ENCODE measurements at regions of chr17 and their contacts with region 1.

Region 1: GRCh38 chr17:82098072-82098821 is at the start of gene FASN:
- DNase-seq: peak; percentile 80 to 97 (median 91)
- ATAC-seq: peak; percentile 68
- H3K4me3 ChIP-seq: peak within 1 kb of the TSS; percentile 54
- H3K4me3 Mint-ChIP-seq: peak within 1 kb of the TSS; percentile 83
- H3K27ac ChIP-seq: peak within 1 kb of the TSS; percentile 58 to 73
- H3K27ac Mint-ChIP-seq: peak within 1 kb of the TSS; percentile 80
- H3K4me1 ChIP-seq: peaks cover 28% of the 10 kb centered on the region
- H3K4me1 Mint-ChIP-seq: peaks cover 3% of the 10 kb centered on the region
- H3K27me3 ChIP-seq: no peaks in the 10 kb centered on the region
- H3K27me3 Mint-ChIP-seq: no peaks in the 10 kb centered on the region
- CTCF ChIP-seq: no peak
- total RNA-seq, gene FASN: 168 to 174 TPM

Region 2: DNA sequence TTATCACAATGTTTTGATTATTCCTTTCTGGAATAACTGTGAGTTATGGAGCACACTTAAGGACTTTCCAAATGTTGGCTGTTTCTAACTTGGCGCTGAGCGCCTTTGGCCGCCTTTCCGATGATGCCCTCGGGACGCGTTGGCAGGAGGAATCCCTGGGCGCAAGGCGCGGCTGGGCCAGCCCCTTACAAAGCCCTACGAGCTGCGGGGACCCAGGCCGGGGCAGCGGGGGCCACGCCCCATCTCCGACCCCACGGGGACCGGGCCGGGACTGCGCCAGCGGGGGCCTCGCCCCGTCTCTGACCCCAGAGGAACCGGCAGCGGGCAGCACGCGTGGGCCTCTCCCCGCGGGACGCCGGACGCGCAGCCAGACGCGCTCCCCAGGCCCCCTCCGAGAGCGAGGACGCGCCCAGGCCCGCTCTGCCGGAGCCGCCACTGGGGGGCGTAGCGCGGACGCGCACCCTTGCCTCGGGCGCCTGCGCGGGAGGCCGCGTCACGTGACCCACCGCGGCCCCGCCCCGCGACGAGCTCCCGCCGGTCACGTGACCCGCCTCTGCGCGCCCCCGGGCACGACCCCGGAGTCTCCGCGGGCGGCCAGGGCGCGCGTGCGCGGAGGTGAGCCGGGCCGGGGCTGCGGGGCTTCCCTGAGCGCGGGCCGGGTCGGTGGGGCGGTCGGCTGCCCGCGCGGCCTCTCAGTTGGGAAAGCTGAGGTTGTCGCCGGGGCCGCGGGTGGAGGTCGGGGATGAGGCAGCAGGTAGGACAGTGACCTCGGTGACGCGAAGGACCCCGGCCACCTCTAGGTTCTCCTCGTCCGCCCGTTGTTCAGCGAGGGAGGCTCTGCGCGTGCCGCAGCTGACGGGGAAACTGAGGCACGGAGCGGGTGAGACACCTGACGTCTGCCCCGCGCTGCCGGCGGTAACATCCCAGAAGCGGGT is 1997.0 kb before region 1 on chr17 and contains the start of gene GAA:
- CTCF ChIA-PET with region 1: no interaction called
- POLR2A ChIA-PET with region 1: no interaction called
- intact Hi-C with region 1: loop called in 1 of 2 experiments (anchors 10 kb)
- DNase-seq: peak; percentile 71 to 95 (median 86)
- ATAC-seq: peak; percentile 83
- H3K4me3 ChIP-seq: peak within 1 kb of the TSS; percentile 99
- H3K4me3 Mint-ChIP-seq: peak within 1 kb of the TSS; percentile 93
- H3K27ac ChIP-seq: peak within 1 kb of the TSS in 1 of 2 donors; percentile 46
- H3K27ac Mint-ChIP-seq: peak within 1 kb of the TSS; percentile 84
- H3K4me1 ChIP-seq: peaks cover 29% of the 10 kb centered on the region
- H3K4me1 Mint-ChIP-seq: peaks cover 35% of the 10 kb centered on the region
- H3K27me3 ChIP-seq: no peaks in the 10 kb centered on the region
- H3K27me3 Mint-ChIP-seq: no peaks in the 10 kb centered on the region
- CTCF ChIP-seq: peak; percentile 64
- total RNA-seq, gene GAA: 22.2 to 22.4 TPM

Region 3: GRCh38 chr17:82030470-82031302 is 67.6 kb before region 1 on chr17:
- CTCF ChIA-PET with region 1: interaction called, 13 read pairs
- POLR2A ChIA-PET with region 1: interaction called, 5 read pairs
- intact Hi-C with region 1: loop called in 1 of 2 experiments (anchors 2 kb)
- DNase-seq: peak; percentile 73 to 92 (median 81)
- ATAC-seq: peak; percentile 85
- H3K4me3 ChIP-seq: peak overlapping the region; percentile 53
- H3K4me3 Mint-ChIP-seq: peak overlapping the region; percentile 91
- H3K27ac ChIP-seq: no peak overlapping the region
- H3K27ac Mint-ChIP-seq: no peak overlapping the region
- H3K4me1 ChIP-seq: peaks cover 28% of the 10 kb centered on the region
- H3K4me1 Mint-ChIP-seq: peaks cover 21% of the 10 kb centered on the region
- H3K27me3 ChIP-seq: no peaks in the 10 kb centered on the region
- H3K27me3 Mint-ChIP-seq: no peaks in the 10 kb centered on the region
- CTCF ChIP-seq: peak; percentile 97

Region 4: DNA sequence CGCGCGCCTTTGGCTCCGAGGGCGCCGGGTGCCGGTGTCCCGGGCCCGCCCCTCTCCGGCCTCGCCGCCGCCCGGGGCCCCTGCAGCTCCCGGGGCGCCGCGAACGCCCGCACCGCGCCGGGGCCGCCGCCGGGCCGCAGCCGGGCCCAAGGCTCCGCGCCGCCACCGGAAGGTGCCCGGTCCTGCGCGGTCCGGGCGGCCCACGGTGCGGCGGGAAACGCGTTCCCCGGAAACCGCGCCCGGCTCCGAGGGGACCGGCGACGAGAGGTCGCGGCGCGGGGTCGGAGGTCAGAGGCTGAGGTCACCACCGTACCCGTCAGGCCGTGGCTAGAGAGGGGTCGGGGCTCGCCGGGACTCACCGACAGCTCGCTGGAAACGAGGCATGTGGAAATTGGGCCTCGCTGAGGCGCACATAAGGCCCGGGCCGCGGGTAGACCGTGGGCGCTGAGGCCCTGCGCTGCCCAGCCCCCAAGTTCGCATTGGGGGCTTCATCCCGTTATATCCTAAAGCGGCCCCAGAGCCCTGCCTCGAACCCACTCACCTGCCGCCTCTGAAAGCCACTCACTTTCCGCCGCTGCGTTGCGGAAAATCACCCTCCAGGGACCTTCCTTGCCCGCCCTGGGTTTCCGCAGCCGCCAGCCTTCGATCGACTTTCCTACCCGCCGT is 32.5 kb before region 1 on chr17 and contains the start of gene DUS1L:
- CTCF ChIA-PET with region 1: no interaction called
- POLR2A ChIA-PET with region 1: interaction called, 10 read pairs
- intact Hi-C with region 1: loop called in 1 of 2 experiments (anchors 2 kb)
- DNase-seq: peak; percentile 43 to 89 (median 66)
- ATAC-seq: peak; percentile 88
- H3K4me3 ChIP-seq: peak within 1 kb of the TSS; percentile 81
- H3K4me3 Mint-ChIP-seq: peak within 1 kb of the TSS; percentile 89
- H3K27ac ChIP-seq: peak within 1 kb of the TSS; percentile 65 to 85
- H3K27ac Mint-ChIP-seq: peak within 1 kb of the TSS; percentile 88
- H3K4me1 ChIP-seq: peaks cover 34% of the 10 kb centered on the region
- H3K4me1 Mint-ChIP-seq: peaks cover 9% of the 10 kb centered on the region
- H3K27me3 ChIP-seq: no peaks in the 10 kb centered on the region
- H3K27me3 Mint-ChIP-seq: no peaks in the 10 kb centered on the region
- CTCF ChIP-seq: no peak
- total RNA-seq, gene DUS1L: 160 to 163 TPM

Region 5: GRCh38 chr17:82143333-82143732 is 45.1 kb after region 1 on chr17:
- CTCF ChIA-PET with region 1: no interaction called
- POLR2A ChIA-PET with region 1: no interaction called
- intact Hi-C with region 1: no loop called
- DNase-seq: no peak
- ATAC-seq: no peak
- H3K4me3 ChIP-seq: no peak overlapping the region
- H3K4me3 Mint-ChIP-seq: no peak overlapping the region
- H3K27ac ChIP-seq: no peak overlapping the region
- H3K27ac Mint-ChIP-seq: no peak overlapping the region
- H3K4me1 ChIP-seq: no peaks in the 10 kb centered on the region
- H3K4me1 Mint-ChIP-seq: peaks cover 6% of the 10 kb centered on the region
- H3K27me3 ChIP-seq: no peaks in the 10 kb centered on the region
- H3K27me3 Mint-ChIP-seq: no peaks in the 10 kb centered on the region
- CTCF ChIP-seq: no peak

Region 6: DNA sequence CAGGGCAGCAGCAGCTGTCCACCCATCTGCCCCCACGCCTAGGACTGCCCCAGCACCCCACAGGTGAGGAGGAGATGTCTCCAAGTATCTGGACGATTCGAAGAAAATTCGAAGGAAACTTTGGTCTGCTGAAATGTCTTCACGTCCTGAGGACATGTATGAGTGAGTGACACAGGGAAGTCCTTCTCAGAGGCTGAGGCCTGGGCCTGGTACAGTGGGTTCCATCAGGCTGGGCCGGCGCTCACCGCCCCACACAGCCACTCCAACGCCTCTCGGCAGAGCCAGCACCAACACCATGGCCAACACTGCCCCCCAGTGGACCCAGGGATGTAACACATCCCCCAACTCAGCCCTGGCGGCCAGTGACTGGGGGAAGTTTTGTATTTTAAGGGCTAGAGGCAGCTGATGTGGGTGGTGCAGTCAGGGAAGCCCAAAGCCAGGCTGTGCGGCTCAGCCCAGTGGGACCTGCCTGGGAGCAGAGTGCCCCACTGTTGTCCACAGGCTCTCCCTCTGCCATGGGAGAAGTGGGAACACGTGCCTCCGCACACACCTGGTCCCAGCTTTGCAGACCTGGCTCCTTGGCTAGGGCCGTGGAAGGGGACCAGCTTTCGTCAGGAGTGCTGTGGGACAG is 55.6 kb after region 1 on chr17:
- CTCF ChIA-PET with region 1: no interaction called
- POLR2A ChIA-PET with region 1: interaction called, 3 read pairs
- intact Hi-C with region 1: loop called in 1 of 2 experiments (anchors 2 kb)
- DNase-seq: peak; percentile 76 to 90 (median 82)
- ATAC-seq: peak; percentile 100
- H3K4me3 ChIP-seq: no peak overlapping the region
- H3K4me3 Mint-ChIP-seq: no peak overlapping the region
- H3K27ac ChIP-seq: no peak overlapping the region
- H3K27ac Mint-ChIP-seq: peak overlapping the region; percentile 69
- H3K4me1 ChIP-seq: peaks cover 10% of the 10 kb centered on the region
- H3K4me1 Mint-ChIP-seq: peaks cover 5% of the 10 kb centered on the region
- H3K27me3 ChIP-seq: no peaks in the 10 kb centered on the region
- H3K27me3 Mint-ChIP-seq: no peaks in the 10 kb centered on the region
- CTCF ChIP-seq: peak; percentile 91